ENCODE measurements at regions of chr9 and their contacts with region 1.

Region 1: GRCh38 chr9:77977210-77977611 is 54.4 kb downstream of the GNAQ start:
- DNase-seq: peak; percentile 94
- H3K4me3 ChIP-seq: peak overlapping the region in 1 of 3 experiments; percentile 23
- H3K27ac ChIP-seq: peak overlapping the region; percentile 44
- H3K4me1 ChIP-seq: peaks cover 40% of the 10 kb centered on the region
- H3K27me3 ChIP-seq: no peaks in the 10 kb centered on the region
- CTCF ChIP-seq: peak; percentile 71 to 76
- POLR2A ChIP-seq: peak; percentile 51

Region 2: DNA sequence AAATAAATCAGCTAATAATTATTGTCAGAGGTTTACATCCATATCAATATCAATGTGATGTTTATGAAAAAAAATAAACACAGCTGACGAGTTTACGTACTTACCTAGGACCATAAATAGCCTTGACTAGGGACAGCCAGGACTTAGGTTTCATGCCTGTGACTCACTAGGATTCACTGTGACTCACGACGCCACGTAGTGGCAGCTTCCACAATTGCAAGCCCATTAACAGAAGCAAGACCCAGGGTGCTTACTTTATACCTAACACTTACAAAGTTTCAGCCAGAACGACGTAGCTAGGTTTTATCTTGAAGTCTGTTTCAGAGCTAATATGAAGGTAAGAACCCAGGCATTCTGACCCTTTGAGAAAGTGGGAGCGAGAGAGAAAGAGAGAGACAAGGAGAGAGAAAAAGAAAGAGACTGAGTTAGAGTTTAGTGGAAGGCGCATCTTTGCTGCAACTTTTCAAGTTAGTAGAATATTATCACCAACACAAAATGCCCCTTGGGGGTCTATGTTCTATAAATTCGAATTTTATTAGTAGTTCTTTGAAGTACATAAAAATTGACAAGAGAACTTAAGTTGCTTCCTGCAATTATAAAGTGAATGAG is 520.3 kb before region 1 on chr9:
- CTCF ChIA-PET with region 1: no interaction called
- POLR2A ChIA-PET with region 1: no interaction called
- dilution Hi-C with region 1: no loop called
- intact Hi-C with region 1: loop called (anchors 10 kb)
- DNase-seq: peak; percentile 93
- H3K4me3 ChIP-seq: no peak overlapping the region
- H3K27ac ChIP-seq: no peak overlapping the region
- H3K4me1 ChIP-seq: no peaks in the 10 kb centered on the region
- H3K27me3 ChIP-seq: no peaks in the 10 kb centered on the region
- CTCF ChIP-seq: peak; percentile 81 to 90
- POLR2A ChIP-seq: no peak

Region 3: GRCh38 chr9:77616191-77616590 is 361.0 kb before region 1 on chr9:
- CTCF ChIA-PET with region 1: no interaction called
- POLR2A ChIA-PET with region 1: no interaction called
- dilution Hi-C with region 1: no loop called
- intact Hi-C with region 1: no loop called
- DNase-seq: peak; percentile 64
- H3K4me3 ChIP-seq: no peak overlapping the region
- H3K27ac ChIP-seq: no peak overlapping the region
- H3K4me1 ChIP-seq: no peaks in the 10 kb centered on the region
- H3K27me3 ChIP-seq: peaks cover 0 to 2% of the 10 kb centered on the region in 2 experiments
- CTCF ChIP-seq: no peak
- POLR2A ChIP-seq: no peak

Region 4: GRCh38 chr9:77848897-77849296 is 128.3 kb before region 1 on chr9:
- CTCF ChIA-PET with region 1: interaction called, 23 read pairs
- POLR2A ChIA-PET with region 1: no interaction called
- dilution Hi-C with region 1: no loop called
- intact Hi-C with region 1: loop called (anchors 2 kb)
- DNase-seq: peak; percentile 80
- H3K4me3 ChIP-seq: no peak overlapping the region
- H3K27ac ChIP-seq: peak overlapping the region; percentile 75
- H3K4me1 ChIP-seq: peaks cover 85% of the 10 kb centered on the region
- H3K27me3 ChIP-seq: no peaks in the 10 kb centered on the region
- CTCF ChIP-seq: no peak
- POLR2A ChIP-seq: no peak

Region 5: GRCh38 chr9:77997611-77998284 is 20.5 kb after region 1 on chr9:
- CTCF ChIA-PET with region 1: interaction called, 37 read pairs
- POLR2A ChIA-PET with region 1: no interaction called
- dilution Hi-C with region 1: no loop called
- intact Hi-C with region 1: loop called (anchors 1 kb)
- DNase-seq: peak; percentile 94
- H3K4me3 ChIP-seq: peak overlapping the region in 1 of 3 experiments; percentile 21
- H3K27ac ChIP-seq: peak overlapping the region; percentile 60
- H3K4me1 ChIP-seq: peaks cover 59% of the 10 kb centered on the region
- H3K27me3 ChIP-seq: no peaks in the 10 kb centered on the region
- CTCF ChIP-seq: no peak
- POLR2A ChIP-seq: no peak

Region 6: DNA sequence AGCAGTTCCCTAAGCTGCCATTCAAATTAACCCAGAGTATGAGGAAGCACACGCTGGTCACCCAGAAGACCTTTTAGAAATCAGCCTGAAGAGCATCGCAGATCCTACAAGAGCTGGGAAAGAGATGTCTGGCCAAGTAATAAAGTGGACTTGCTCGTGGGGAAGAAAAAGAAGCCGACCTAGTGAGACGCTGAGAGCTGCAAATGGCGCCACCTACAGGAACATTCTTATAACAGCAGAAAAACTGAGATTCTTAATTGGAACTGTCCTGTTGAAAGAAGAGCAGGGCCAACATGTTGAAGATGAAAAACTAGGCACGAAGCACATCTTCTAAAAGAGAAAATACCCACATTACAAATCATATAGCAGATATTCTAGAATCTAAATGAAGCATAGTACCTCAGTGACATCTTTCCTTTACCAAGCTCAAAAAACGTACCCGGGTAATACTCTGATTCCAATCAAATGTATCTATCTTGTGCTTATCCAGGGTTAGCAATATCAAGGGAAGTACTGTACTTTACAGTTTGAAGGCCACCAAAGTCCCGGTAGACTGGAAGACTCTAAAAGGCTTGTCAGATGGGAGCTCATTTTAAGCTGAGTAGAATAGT is 58.3 kb after region 1 on chr9:
- CTCF ChIA-PET with region 1: interaction called, 431 read pairs
- POLR2A ChIA-PET with region 1: interaction called, 3 read pairs
- dilution Hi-C with region 1: no loop called
- intact Hi-C with region 1: loop called (anchors 1 kb)
- DNase-seq: peak; percentile 88
- H3K4me3 ChIP-seq: no peak overlapping the region
- H3K27ac ChIP-seq: no peak overlapping the region
- H3K4me1 ChIP-seq: peaks cover 38% of the 10 kb centered on the region
- H3K27me3 ChIP-seq: no peaks in the 10 kb centered on the region
- CTCF ChIP-seq: peak; percentile 69 to 74
- POLR2A ChIP-seq: no peak

Region 7: GRCh38 chr9:78213712-78214111 is 236.5 kb after region 1 on chr9:
- CTCF ChIA-PET with region 1: interaction called, 40 read pairs
- POLR2A ChIA-PET with region 1: no interaction called
- dilution Hi-C with region 1: no loop called
- intact Hi-C with region 1: loop called (anchors 1 kb)
- DNase-seq: peak; percentile 77
- H3K4me3 ChIP-seq: no peak overlapping the region
- H3K27ac ChIP-seq: no peak overlapping the region
- H3K4me1 ChIP-seq: peaks cover 2% of the 10 kb centered on the region
- H3K27me3 ChIP-seq: no peaks in the 10 kb centered on the region
- CTCF ChIP-seq: peak; percentile 17 to 46
- POLR2A ChIP-seq: no peak

Measured in endothelial cell of umbilical vein (primary cell).